ENCODE measurements at regions of chr18 and their contacts with region 1.

Region 1: DNA sequence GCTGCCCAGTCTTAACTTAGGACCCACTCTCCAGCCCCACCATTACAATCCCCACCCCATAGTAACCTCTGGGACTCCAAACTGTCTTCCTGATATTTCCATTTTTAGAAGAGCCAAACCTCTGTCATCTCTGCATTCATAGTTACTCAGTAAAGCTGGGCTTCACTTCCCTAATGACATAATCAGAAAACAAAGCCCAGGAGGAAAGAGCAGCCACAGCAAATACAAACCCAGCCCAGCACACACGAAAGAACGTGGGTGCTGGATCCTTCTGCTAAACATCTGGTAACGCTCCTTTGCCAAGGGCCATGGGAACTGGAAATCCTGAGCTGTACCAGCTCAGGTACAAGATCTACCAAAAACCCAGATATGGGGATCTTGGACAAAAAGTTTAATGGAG is 36.8 kb upstream of the RIOK3 start:
- DNase-seq: no peak
- ATAC-seq: no peak
- H3K4me3 ChIP-seq: no peak overlapping the region
- H3K27ac ChIP-seq: no peak overlapping the region
- H3K4me1 ChIP-seq: no peaks in the 10 kb centered on the region
- H3K27me3 ChIP-seq: no peaks in the 10 kb centered on the region
- CTCF ChIP-seq: no peak
- POLR2A ChIP-seq: no peak

Region 2: DNA sequence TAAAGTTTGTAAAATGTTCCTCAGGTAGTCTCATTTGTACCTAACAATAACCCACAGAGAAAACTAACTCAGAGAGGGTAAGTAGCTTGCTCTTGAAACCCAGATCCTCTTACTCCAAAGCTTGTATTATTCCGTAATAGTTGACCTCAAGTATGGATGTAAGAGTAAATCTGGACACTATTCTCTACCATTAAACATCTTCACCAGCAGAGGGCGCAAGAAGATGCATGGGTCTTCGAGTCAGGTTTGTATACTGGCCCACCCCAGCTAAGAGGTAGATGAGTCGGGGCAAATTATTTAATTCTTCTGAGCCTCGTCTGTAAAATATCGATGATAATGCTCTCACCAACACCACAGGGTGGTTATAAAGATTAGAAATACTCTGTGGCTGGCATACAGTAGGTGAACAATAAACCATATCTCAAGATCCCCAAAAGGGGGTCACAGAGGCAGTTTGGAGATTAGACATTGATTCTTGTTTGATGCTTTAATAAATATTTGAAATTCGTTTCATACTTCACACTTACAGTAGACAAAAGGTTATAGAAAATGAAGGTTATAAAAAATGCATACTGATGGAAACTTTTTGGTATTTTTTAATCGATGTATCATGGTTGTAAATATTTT is 284.5 kb before region 1 on chr18:
- intact Hi-C with region 1: loop called (anchors 10 kb)
- DNase-seq: peak; percentile 54 to 78 (median 62)
- ATAC-seq: no peak
- H3K4me3 ChIP-seq: no peak overlapping the region
- H3K27ac ChIP-seq: no peak overlapping the region
- H3K4me1 ChIP-seq: peaks cover 23% of the 10 kb centered on the region
- H3K27me3 ChIP-seq: no peaks in the 10 kb centered on the region
- CTCF ChIP-seq: peak; percentile 57 to 79 (median 70)
- POLR2A ChIP-seq: no peak